PC-9 (cell line): ENCODE measurements at regions of chr5 and their contacts with region 1.

Region 1: GRCh38 chr5:145130996-145131395 is 704.1 kb downstream of the PRELID2 start:
- DNase-seq: no peak
- H3K4me3 ChIP-seq: no peak overlapping the region
- H3K27ac ChIP-seq: no peak overlapping the region
- H3K4me1 ChIP-seq: no peaks in the 10 kb centered on the region
- H3K27me3 ChIP-seq: no peaks in the 10 kb centered on the region
- CTCF ChIP-seq: no peak

Region 2: DNA sequence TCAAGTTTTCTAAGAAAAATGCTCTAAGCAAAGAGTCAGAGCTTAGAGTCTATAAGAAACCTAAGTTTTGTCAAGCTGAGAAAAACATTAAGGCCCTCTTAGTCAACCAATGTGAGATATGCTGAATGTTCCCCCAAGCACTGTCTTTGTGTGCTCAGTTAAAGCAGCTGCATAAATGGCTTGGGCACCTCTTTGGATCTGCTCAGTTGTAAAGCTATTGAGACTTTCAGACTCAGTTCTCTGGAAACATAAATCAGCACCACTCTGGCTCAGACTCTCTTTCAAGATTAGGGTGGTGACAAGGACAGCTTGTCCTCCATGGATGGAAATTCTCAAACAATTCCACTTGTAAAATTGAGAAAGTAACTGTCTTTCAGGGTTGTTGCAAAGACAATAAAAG is 103.7 kb before region 1 on chr5:
- CTCF ChIA-PET with region 1: no interaction called
- POLR2A ChIA-PET with region 1: interaction called, 13 read pairs
- intact Hi-C with region 1: no loop called
- DNase-seq: no peak
- H3K4me3 ChIP-seq: no peak overlapping the region
- H3K27ac ChIP-seq: no peak overlapping the region
- H3K4me1 ChIP-seq: no peaks in the 10 kb centered on the region
- H3K27me3 ChIP-seq: no peaks in the 10 kb centered on the region
- CTCF ChIP-seq: no peak

Region 3: GRCh38 chr5:145521066-145521465 is 390.1 kb after region 1 on chr5:
- CTCF ChIA-PET with region 1: no interaction called
- POLR2A ChIA-PET with region 1: no interaction called
- intact Hi-C with region 1: no loop called
- DNase-seq: no peak
- H3K4me3 ChIP-seq: no peak overlapping the region
- H3K27ac ChIP-seq: no peak overlapping the region
- H3K4me1 ChIP-seq: no peaks in the 10 kb centered on the region
- H3K27me3 ChIP-seq: no peaks in the 10 kb centered on the region
- CTCF ChIP-seq: no peak